Mammary epithelial cell (primary cell): ENCODE measurements at regions of chr12 and their contacts with region 1.

Region 1: DNA sequence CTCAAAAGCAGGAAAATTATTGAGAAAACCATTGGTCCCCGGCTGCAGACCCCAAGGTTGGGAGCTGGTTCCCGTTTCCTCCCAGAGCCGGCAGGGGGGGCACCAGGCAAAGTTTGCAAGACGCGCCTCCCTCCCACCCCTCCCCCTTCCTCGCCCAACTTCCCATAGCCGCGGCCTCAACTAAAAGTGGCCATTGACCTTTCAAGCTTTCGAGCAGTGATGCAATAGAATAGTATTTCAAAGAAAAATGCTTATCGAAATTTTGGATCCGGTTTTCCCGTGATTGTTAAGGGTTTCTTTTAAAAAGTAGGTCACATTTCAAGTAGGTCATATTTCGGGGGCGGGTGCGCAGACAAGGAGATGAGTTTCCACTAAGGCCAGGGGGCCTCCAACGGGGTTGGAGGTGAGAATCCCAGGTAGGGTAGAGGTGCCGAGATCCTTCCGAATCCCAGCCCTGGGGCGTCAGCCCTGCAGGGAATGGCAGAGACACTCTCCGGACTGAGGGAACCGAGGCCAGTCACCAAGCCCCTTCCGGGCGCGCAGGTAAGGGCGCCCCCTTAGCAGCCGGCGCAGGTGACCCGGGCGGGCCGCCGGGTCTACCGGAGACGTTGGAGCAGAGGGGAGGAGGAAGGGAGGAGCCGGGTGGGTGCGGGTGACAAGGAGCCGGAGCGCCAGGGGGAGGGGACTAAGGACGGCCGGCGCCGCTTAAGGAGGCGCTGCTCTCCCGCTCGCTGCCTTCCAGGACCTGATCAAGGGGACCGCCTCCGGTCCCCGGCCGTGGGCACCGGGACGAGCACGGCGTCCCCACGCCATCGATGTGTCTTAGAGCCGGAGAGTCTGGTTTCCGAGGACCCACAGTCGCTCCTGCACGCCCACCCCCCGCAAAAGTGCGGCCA is 2.6 kb upstream of the SOCS2 start:
- DNase-seq: peak; percentile 72
- H3K4me3 ChIP-seq: peak overlapping the region; percentile 74 to 97 (median 84)
- H3K27ac ChIP-seq: peak overlapping the region; percentile 56
- H3K4me1 ChIP-seq: peaks cover 13% of the 10 kb centered on the region
- H3K27me3 ChIP-seq: no peaks in the 10 kb centered on the region
- CTCF ChIP-seq: peak; percentile 46 to 88

Region 2: GRCh38 chr12:93315158-93315906 is 254.6 kb before region 1 on chr12:
- CTCF ChIA-PET with region 1: no interaction called
- dilution Hi-C with region 1: no loop called
- in situ Hi-C with region 1: no loop called
- intact Hi-C with region 1: no loop called
- DNase-seq: no peak
- H3K4me3 ChIP-seq: no peak overlapping the region
- H3K27ac ChIP-seq: no peak overlapping the region
- H3K4me1 ChIP-seq: peaks cover 3% of the 10 kb centered on the region
- H3K27me3 ChIP-seq: no peaks in the 10 kb centered on the region
- CTCF ChIP-seq: no peak

Region 3: GRCh38 chr12:93591137-93591868 is 21.4 kb after region 1 on chr12:
- CTCF ChIA-PET with region 1: no interaction called
- dilution Hi-C with region 1: no loop called
- in situ Hi-C with region 1: no loop called
- intact Hi-C with region 1: loop called (anchors 2 kb)
- DNase-seq: peak; percentile 76
- H3K4me3 ChIP-seq: peak overlapping the region; percentile 66 to 99 (median 68)
- H3K27ac ChIP-seq: peak overlapping the region; percentile 87
- H3K4me1 ChIP-seq: no peaks in the 10 kb centered on the region
- H3K27me3 ChIP-seq: no peaks in the 10 kb centered on the region
- CTCF ChIP-seq: no peak

Region 4: GRCh38 chr12:93677195-93678064 is 107.5 kb after region 1 on chr12 and contains the start of gene CRADD:
- CTCF ChIA-PET with region 1: no interaction called
- dilution Hi-C with region 1: no loop called
- in situ Hi-C with region 1: loop called in 1 of 2 experiments (anchors 5 kb)
- intact Hi-C with region 1: loop called (anchors 1 kb)
- DNase-seq: peak; percentile 96
- H3K4me3 ChIP-seq: peak within 1 kb of the TSS; percentile 66 to 80 (median 78)
- H3K27ac ChIP-seq: peak within 1 kb of the TSS; percentile 93
- H3K4me1 ChIP-seq: peaks cover 10% of the 10 kb centered on the region
- H3K27me3 ChIP-seq: no peaks in the 10 kb centered on the region
- CTCF ChIP-seq: no peak
- total RNA-seq, gene CRADD: 13.3 to 14.2 TPM

Region 5: DNA sequence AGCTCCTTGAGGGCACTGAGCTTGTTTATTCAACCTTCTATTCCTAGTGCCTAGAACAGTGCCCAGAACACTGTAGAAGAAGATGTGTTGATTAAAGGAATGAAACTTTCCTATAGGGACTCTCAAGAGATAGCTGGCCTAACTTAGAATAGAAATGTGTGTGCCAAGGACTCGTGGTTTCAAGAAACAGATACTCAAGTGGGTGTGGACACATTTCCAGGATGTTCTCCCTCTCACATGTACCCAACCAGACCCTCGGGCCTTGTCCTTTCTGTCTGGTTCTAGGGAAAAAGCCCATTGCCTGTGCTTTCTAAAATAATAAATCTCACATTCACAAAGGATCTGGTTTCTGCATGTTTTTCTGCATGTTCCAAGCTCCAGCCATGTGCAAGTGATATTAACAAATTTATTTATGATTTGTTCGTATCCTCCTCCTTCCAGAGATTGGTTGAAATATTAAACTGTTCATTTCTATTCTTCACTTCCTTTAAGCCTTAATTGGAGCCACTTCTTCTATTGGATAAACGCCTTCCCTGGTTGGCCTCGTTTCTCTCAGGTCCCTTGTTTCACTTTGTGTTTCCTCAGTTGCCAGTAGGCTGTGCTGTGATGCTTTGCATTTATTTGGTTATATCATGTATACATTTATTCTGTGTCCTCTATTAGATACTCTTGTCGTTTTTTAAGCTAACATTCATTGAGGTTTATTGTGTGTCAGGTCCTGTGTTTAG is 197.1 kb after region 1 on chr12:
- CTCF ChIA-PET with region 1: no interaction called
- dilution Hi-C with region 1: no loop called
- in situ Hi-C with region 1: loop called in 1 of 2 experiments (anchors 10 kb)
- intact Hi-C with region 1: loop called (anchors 1 kb)
- DNase-seq: peak; percentile 61
- H3K4me3 ChIP-seq: no peak overlapping the region
- H3K27ac ChIP-seq: no peak overlapping the region
- H3K4me1 ChIP-seq: peaks cover 6% of the 10 kb centered on the region
- H3K27me3 ChIP-seq: no peaks in the 10 kb centered on the region
- CTCF ChIP-seq: peak; percentile 63

Region 6: GRCh38 chr12:93979189-93979588 is 409.3 kb after region 1 on chr12:
- CTCF ChIA-PET with region 1: no interaction called
- dilution Hi-C with region 1: no loop called
- in situ Hi-C with region 1: no loop called
- intact Hi-C with region 1: loop called (anchors 1 kb)
- DNase-seq: peak; percentile 24
- H3K4me3 ChIP-seq: no peak overlapping the region
- H3K27ac ChIP-seq: no peak overlapping the region
- H3K4me1 ChIP-seq: peaks cover 5% of the 10 kb centered on the region
- H3K27me3 ChIP-seq: no peaks in the 10 kb centered on the region
- CTCF ChIP-seq: peak; percentile 27 to 50